Activated T-helper 2 cell treated with anti-CD3 and anti-CD28 coated beads, Interferon-gamma antibody, Interleukin-2, Interleukin-4, amounts not matched to agents 10 μg/mL and 5 μg/mL and 100 μg/mL, durations not matched to agents 14 hours and 24 hours and 36 hours (primary cell): ENCODE measurements at regions of chr5 and their contacts with region 1.

Region 1: DNA sequence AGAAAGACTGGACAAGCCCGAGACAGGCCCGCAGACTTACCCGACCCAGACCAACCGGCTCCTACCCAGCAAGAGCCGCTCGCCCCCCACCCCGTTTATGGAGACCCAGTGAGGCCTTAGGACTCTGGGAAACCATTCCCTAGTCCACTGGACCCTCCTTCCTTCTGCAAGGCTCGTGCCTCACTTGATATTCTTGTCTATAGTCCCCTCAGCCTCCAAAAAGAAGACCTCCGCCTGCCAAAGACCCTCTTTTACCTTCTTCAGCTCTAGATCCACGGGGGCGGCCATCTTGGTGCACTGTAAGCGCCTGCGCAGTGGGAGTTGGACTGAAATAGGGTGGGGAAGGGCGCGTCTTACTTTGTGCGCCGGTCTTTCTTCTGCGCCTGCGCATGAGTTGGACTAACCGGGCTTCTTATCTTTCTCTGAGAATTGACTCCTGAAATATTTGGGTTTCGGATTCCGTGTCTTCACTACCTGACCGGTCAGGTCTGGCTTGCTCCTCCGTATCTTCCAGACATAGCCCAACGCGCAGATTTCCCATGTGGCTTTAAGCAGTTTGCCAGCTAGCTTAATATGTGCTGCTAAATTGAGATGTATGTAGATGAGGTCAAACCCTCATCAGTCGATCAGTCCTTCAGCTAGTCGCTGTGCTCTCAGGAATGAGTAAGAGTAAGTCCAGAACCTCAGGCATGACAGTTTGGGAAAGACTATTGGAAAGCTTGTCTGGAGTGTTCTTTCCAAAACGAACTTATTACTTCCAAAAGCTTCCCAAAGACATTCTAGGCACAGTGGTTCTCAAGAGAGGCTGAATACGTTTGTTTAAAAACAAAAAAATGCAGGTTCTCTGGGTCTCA is at the start of gene PFDN1:
- DNase-seq: peak; percentile 91
- H3K4me3 Mint-ChIP-seq: peak within 1 kb of the TSS; percentile 100
- H3K27ac Mint-ChIP-seq: peak within 1 kb of the TSS; percentile 98
- H3K4me1 Mint-ChIP-seq: peaks cover 24% of the 10 kb centered on the region
- H3K27me3 Mint-ChIP-seq: peaks cover 11% of the 10 kb centered on the region
- total RNA-seq, gene PFDN1: 60.4 and 61.0 TPM in 2 replicates

Region 2: DNA sequence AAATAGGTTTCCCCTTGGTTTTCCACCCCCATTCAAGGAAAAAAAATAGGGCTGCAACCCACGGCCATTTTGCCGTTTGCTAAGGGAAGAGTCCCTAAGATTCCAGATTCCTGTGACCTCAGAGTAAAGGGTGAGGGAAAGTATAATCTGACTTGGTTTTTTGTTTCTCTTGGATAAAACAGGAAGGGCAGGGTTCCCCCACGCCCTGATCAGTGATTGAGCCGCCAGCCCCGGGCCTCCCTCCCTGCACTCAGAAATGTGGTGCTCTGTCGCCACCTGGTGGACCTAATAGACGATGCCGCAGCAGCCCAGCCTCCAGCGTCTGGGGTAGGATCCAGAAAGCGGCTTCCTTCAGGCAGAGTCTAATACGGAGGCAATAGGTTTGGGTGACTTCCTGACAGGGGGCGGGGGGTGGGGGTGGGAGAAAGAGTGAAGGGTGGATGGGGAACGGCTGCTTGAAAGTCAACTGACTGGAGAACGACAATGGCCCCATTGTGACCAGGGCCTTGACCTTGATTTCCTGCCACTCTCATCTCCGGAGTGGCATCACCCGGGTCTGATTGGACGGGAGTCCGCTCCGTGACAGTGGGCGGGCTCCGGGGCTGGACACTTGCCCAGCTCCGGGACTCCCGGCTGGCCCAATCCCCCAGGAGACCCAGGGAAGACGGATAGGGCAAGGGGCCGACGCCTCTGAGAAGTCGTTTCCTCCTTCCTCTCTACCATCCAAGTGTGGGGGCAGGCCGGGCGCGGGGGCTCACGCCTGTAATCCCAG is 145.8 kb before region 1 on chr5:
- intact Hi-C with region 1: no loop called
- DNase-seq: peak; percentile 77
- H3K4me3 Mint-ChIP-seq: peak overlapping the region; percentile 33
- H3K27ac Mint-ChIP-seq: no peak overlapping the region
- H3K4me1 Mint-ChIP-seq: no peaks in the 10 kb centered on the region
- H3K27me3 Mint-ChIP-seq: peaks cover 4% of the 10 kb centered on the region

Region 3: GRCh38 chr5:140345919-140346347 is 42.9 kb after region 1 on chr5:
- intact Hi-C with region 1: loop called (anchors 2 kb)
- DNase-seq: no peak
- H3K4me3 Mint-ChIP-seq: peak overlapping the region; percentile 87
- H3K27ac Mint-ChIP-seq: no peak overlapping the region
- H3K4me1 Mint-ChIP-seq: peaks cover 42% of the 10 kb centered on the region
- H3K27me3 Mint-ChIP-seq: peaks cover 8% of the 10 kb centered on the region

Region 4: DNA sequence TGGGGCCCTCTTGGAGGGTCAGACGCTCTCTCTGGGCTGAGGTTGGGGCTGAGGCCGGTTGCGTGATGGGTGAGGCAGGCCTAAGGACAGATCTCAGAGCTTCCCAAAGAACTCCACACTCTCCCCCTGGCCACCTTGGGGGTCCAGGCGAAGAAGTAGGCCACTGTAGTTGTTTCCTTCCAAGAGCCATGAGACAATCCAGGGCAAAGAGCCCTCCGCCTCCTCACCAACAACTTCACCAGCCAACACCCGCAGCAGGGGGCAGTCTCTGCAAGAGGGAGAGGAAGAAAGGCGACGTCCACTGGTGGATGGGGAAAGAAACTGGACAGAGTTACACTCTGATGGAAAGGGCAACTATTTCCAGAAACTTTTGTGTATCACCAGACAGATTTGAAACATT is 272.3 kb after region 1 on chr5:
- intact Hi-C with region 1: no loop called
- DNase-seq: no peak
- H3K4me3 Mint-ChIP-seq: no peak overlapping the region
- H3K27ac Mint-ChIP-seq: no peak overlapping the region
- H3K4me1 Mint-ChIP-seq: peaks cover 1% of the 10 kb centered on the region
- H3K27me3 Mint-ChIP-seq: peaks cover 2% of the 10 kb centered on the region

Region 5: GRCh38 chr5:141866149-141867120 is 1563.4 kb after region 1 on chr5:
- intact Hi-C with region 1: no loop called
- DNase-seq: no peak
- H3K4me3 Mint-ChIP-seq: no peak overlapping the region
- H3K27ac Mint-ChIP-seq: no peak overlapping the region
- H3K4me1 Mint-ChIP-seq: no peaks in the 10 kb centered on the region
- H3K27me3 Mint-ChIP-seq: peaks cover 13% of the 10 kb centered on the region